T-cell (primary cell): ENCODE measurements at regions of chr1 and their contacts with region 1.

Region 1: DNA sequence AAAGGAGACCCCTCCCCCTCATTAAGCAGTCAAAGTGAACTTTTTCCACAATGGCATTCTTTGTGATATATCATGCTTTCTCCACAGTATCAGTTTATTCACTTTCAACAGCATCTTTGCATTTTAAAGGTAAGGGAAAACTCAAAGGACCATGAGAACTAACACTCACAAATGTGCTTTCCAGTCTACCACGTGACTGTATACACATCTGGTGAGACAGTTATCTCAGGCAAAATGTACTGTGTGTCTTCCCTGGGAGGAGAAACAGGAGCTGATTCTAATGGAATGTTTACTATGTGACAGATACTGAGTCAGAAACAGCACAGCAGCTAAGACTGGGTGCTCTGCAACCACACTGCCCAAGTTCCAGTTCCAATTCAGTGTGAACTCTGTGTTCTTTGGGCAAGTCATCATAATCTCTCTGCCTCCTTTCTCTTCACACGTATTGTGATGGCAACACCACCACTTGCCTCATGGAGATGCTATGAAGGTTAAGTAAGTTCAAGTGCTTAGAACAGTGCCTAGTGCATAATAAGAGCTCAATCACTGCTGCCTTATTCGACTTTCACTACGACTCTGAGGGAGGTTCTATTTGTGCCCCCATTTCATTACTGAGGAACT is 79.0 kb downstream of the SLC45A1 start:
- DNase-seq: peak in 8 of 35 experiments; percentile 8 to 50 (median 20)
- ATAC-seq: peak; percentile 20 to 61 (median 28)
- H3K4me3 ChIP-seq: no peak overlapping the region
- H3K4me3 Mint-ChIP-seq: peak overlapping the region in 1 of 3 donors; percentile 84
- H3K27ac ChIP-seq: peak overlapping the region; percentile 8
- H3K27ac Mint-ChIP-seq: peak overlapping the region; percentile 74 to 79
- H3K4me1 ChIP-seq: peaks cover 28 to 42% of the 10 kb centered on the region in 2 experiments
- H3K4me1 Mint-ChIP-seq: peaks cover 65 to 71% (median 68%) of the 10 kb centered on the region in 3 donors
- H3K27me3 ChIP-seq: no peaks in the 10 kb centered on the region
- H3K27me3 Mint-ChIP-seq: no peaks in the 10 kb centered on the region

Region 2: DNA sequence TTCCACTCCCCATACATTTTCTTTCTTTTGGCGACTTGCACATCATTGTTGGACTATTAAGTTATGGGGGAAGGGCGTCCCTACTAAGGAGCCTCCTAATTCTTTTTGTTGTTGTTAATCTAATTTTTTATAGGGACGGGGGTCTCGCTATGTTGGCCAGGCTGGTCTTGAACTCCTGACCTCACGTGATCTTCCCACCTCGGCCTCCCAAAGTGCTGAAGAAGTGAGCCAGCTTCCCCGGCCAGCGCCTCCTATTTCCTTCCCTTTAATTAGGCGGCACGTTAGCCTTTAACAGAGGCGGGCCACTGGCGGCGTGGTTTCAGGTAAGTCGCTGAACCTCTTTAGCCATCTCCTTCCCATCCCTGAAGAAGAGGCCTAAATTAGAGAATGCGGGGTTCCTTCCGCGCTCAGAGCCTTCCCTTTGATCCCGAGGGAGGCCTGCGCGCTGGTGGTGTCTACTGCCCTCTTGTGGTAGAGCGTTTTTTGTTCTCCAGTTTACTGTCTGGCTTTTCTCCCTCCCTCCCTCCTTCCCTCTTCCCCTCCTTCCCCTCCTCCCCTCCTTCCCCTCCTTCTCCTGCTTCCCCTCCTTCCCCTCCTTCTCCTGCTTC is 494.3 kb before region 1 on chr1:
- CTCF ChIA-PET with region 1: no interaction called
- POLR2A ChIA-PET with region 1: interaction called in 1 of 2 experiments, 10 read pairs
- DNase-seq: peak in 33 of 35 experiments; percentile 7 to 84 (median 36)
- ATAC-seq: peak; percentile 60 to 78 (median 68)
- H3K4me3 ChIP-seq: peak overlapping the region; percentile 42 to 47
- H3K4me3 Mint-ChIP-seq: peak overlapping the region; percentile 57 to 63 (median 58)
- H3K27ac ChIP-seq: no peak overlapping the region
- H3K27ac Mint-ChIP-seq: no peak overlapping the region
- H3K4me1 ChIP-seq: peaks cover 0 to 18% of the 10 kb centered on the region in 2 experiments
- H3K4me1 Mint-ChIP-seq: peaks cover 0 to 33% (median 4%) of the 10 kb centered on the region in 3 donors
- H3K27me3 ChIP-seq: peaks cover 0 to 5% of the 10 kb centered on the region in 2 experiments
- H3K27me3 Mint-ChIP-seq: no peaks in the 10 kb centered on the region

Region 3: GRCh38 chr1:8040586-8040985 is 356.3 kb before region 1 on chr1:
- CTCF ChIA-PET with region 1: no interaction called
- POLR2A ChIA-PET with region 1: no interaction called
- DNase-seq: no peak
- ATAC-seq: no peak
- H3K4me3 ChIP-seq: no peak overlapping the region
- H3K4me3 Mint-ChIP-seq: no peak overlapping the region
- H3K27ac ChIP-seq: no peak overlapping the region
- H3K27ac Mint-ChIP-seq: no peak overlapping the region
- H3K4me1 ChIP-seq: no peaks in the 10 kb centered on the region
- H3K4me1 Mint-ChIP-seq: no peaks in the 10 kb centered on the region
- H3K27me3 ChIP-seq: no peaks in the 10 kb centered on the region
- H3K27me3 Mint-ChIP-seq: peaks cover 4% of the 10 kb centered on the region in 2 donors

Region 4: DNA sequence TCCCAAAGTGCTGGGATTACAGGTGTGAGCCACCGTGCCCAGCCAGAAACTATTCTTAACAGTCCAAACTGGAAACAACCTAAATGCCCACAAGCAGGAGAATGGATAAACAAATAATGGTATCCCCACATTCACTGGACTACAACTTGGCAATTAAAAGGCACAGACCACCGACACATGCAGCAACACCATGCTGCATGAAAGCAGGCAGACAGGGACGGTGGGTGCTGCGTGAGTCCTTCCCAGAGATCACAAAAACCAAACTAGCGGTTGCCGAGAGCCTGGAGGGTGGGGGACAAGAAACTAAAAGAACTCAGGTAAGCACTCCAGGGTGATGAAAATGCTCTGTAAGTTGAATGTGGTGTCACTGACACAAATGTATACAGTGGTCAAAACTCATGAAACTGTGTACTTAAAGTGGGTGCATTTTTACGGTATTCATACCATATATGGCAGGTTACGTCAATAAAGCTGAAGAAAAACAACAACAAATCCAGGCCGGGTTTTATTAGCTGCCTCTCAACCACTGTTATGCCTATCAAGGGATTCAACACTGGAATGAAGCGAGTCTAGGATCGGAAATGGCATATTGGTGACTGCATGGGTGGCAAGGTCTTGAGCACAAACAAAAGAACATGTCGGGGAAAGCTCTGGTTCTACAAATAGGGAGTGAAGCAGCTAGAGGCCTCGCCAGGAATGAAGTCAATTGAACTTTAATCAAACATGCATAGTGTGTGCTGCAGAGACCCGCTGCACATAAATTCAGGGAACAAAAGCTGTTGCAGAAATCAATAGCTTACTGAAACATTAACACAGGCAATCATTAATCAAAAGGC is 26.6 kb before region 1 on chr1:
- CTCF ChIA-PET with region 1: no interaction called
- POLR2A ChIA-PET with region 1: no interaction called
- DNase-seq: no peak
- ATAC-seq: no peak
- H3K4me3 ChIP-seq: no peak overlapping the region
- H3K4me3 Mint-ChIP-seq: no peak overlapping the region
- H3K27ac ChIP-seq: no peak overlapping the region
- H3K27ac Mint-ChIP-seq: no peak overlapping the region
- H3K4me1 ChIP-seq: peaks cover 0 to 14% of the 10 kb centered on the region in 2 experiments
- H3K4me1 Mint-ChIP-seq: peaks cover 61 to 75% (median 64%) of the 10 kb centered on the region in 3 donors
- H3K27me3 ChIP-seq: no peaks in the 10 kb centered on the region
- H3K27me3 Mint-ChIP-seq: no peaks in the 10 kb centered on the region